ENCODE measurements at regions of chr1 and their contacts with region 1.

Region 1: GRCh38 chr1:167066333-167067122 is 23.6 kb downstream of the GPA33 start:
- DNase-seq: peak; percentile 79
- H3K4me3 ChIP-seq: peak overlapping the region in 2 of 4 donors; percentile 21 to 29
- H3K27ac ChIP-seq: no peak overlapping the region
- H3K4me1 ChIP-seq: peaks cover 0 to 7% (median 5%) of the 10 kb centered on the region in 4 donors
- H3K27me3 ChIP-seq: no peaks in the 10 kb centered on the region
- CTCF ChIP-seq: peak; percentile 76 to 96 (median 83)
- EP300 ChIP-seq: no peak
- POLR2A ChIP-seq: no peak

Region 2: DNA sequence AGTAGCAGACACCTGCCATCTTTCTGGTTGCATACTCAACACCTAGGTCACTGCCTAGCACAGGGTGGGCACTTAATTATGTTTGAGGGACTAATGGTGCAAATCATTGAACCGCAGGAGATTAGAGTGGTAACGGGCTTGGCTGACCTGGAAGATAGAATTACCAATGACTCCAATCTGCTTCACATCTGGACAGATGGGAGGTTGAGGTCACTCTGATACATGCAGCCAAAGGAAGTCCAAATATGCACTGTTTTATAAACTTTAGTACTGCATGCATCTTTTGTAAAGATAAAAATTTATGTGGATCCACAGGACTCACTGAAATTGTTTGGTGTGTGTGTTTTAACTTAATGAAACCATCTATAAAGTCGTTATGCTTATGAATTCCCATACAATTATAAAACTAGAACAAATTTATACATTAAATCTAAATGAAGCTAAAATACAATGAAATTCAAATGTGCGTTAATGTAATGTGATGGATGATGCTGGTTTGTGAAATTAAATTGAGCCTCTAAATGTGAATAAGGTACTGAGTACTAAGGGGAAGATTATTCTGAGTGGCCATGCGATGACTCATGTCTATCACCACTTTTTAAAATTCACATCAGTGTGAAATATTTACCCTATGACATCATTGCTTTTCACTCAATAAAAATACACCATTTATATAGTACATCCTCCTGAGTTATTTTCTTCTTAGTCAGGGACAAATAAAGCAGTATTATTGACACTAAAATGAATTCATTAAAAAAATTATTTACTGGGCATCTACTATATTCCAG is 675.1 kb before region 1 on chr1:
- intact Hi-C with region 1: no loop called
- DNase-seq: no peak
- H3K4me3 ChIP-seq: no peak overlapping the region
- H3K27ac ChIP-seq: no peak overlapping the region
- H3K4me1 ChIP-seq: no peaks in the 10 kb centered on the region
- H3K27me3 ChIP-seq: no peaks in the 10 kb centered on the region
- CTCF ChIP-seq: no peak
- EP300 ChIP-seq: no peak
- POLR2A ChIP-seq: no peak

Region 3: DNA sequence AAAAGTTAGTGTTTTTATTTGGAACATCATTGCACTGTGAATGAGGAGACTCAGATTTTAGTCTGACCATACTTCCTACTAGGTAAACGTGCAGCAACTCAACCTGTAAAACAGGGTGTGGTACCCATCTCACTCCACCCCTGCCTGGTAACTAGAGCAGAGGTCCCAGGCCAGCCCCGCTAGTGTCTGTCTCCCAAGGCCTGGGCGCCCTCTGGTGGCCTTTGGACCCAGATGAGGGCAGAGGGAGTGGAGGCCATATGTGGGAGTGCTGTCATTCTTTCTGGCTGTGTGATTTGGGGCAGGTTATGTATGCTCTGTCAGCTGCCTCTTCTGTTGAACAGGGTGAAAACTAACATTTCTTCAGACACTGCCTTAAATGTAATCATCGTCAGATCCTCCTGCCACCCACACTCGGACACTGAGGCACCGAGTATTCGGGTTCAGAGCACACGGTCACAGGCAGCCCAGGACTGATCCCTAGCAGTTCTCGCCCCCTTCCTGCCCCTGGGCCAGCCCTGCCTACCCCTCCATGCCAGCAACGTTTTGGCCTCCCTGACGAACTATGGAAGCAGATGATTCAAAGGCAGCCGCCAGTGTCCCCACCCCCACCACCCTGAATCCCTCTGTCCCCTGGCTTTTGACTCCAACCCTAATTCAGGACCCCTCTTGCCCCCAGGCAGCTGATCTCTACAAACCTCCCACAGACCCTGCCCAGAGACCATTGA is 375.8 kb after region 1 on chr1:
- intact Hi-C with region 1: loop called (anchors 1 kb)
- DNase-seq: peak; percentile 87
- H3K4me3 ChIP-seq: no peak overlapping the region
- H3K27ac ChIP-seq: no peak overlapping the region
- H3K4me1 ChIP-seq: peaks cover 0 to 12% (median 9%) of the 10 kb centered on the region in 4 donors
- H3K27me3 ChIP-seq: peaks cover 0 to 20% (median 3%) of the 10 kb centered on the region in 3 donors
- CTCF ChIP-seq: peak; percentile 57 to 82 (median 76)
- EP300 ChIP-seq: no peak
- POLR2A ChIP-seq: no peak